ENCODE measurements at regions of chr16 and their contacts with region 1.

Region 1: GRCh38 chr16:59455497-59455896 is 721.4 kb upstream of the GOT2 start:
- DNase-seq: no peak
- H3K4me3 ChIP-seq: no peak overlapping the region
- H3K27ac ChIP-seq: no peak overlapping the region
- H3K4me1 ChIP-seq: no peaks in the 10 kb centered on the region
- H3K27me3 ChIP-seq: no peaks in the 10 kb centered on the region
- CTCF ChIP-seq: no peak

Region 2: DNA sequence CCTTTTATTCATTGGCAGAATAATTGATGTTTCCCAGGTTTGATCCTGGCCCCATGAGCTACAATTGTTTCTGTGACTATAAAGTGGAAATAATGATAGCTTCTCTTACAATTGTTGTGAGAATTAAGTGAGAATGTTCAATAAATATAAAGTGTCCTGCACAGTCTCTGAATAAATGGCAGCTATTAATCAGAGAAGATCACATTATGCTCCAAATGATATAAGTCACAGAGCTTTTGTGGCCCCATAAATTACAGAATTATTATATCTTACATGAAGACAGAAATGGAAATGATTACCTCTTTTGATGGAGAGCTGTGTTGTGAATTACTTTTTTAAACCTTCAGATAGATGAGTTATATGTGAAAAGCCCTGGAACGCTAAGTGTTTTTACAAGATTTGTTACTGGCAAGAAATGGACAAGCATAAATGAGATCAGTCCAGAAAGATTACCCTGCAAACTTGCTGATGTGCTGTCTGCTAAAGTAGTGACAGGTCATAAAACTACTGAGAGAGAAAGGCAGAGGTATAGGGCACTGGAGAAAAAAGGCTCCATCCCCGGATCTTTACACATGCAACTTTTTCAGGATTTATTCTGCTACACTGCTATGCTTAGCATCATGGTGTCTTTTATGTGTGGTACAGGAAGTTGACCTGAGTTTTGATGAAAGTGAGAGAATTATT is 29.5 kb after region 1 on chr16:
- CTCF ChIA-PET with region 1: no interaction called
- POLR2A ChIA-PET with region 1: interaction called, 11 read pairs
- intact Hi-C with region 1: no loop called
- DNase-seq: no peak
- H3K4me3 ChIP-seq: no peak overlapping the region
- H3K27ac ChIP-seq: no peak overlapping the region
- H3K4me1 ChIP-seq: no peaks in the 10 kb centered on the region
- H3K27me3 ChIP-seq: no peaks in the 10 kb centered on the region
- CTCF ChIP-seq: no peak

Measured in PC-9 (cell line).